PC-9 (cell line): ENCODE measurements at regions of chr14 and their contacts with region 1.

Region 1: GRCh38 chr14:69611201-69612011 is at the start of gene SUSD6:
- DNase-seq: peak; percentile 65 to 91
- H3K4me3 ChIP-seq: peak within 1 kb of the TSS; percentile 74
- H3K27ac ChIP-seq: no peak within 1 kb of the TSS
- H3K4me1 ChIP-seq: peaks cover 17% of the 10 kb centered on the region
- H3K27me3 ChIP-seq: no peaks in the 10 kb centered on the region
- CTCF ChIP-seq: no peak
- total RNA-seq, gene SUSD6: 24.1 and 43.3 TPM in 2 replicates

Region 2: GRCh38 chr14:69553221-69553620 is 58.2 kb before region 1 on chr14:
- CTCF ChIA-PET with region 1: no interaction called
- POLR2A ChIA-PET with region 1: no interaction called
- intact Hi-C with region 1: no loop called
- DNase-seq: peak in 1 of 2 experiments; percentile 76
- H3K4me3 ChIP-seq: no peak overlapping the region
- H3K27ac ChIP-seq: no peak overlapping the region
- H3K4me1 ChIP-seq: peaks cover 7% of the 10 kb centered on the region
- H3K27me3 ChIP-seq: peaks cover 17% of the 10 kb centered on the region; the same call in 1 of the 2 replicates
- CTCF ChIP-seq: no peak

Region 3: GRCh38 chr14:69629225-69630127 is 18.1 kb after region 1 on chr14:
- CTCF ChIA-PET with region 1: no interaction called
- POLR2A ChIA-PET with region 1: no interaction called
- intact Hi-C with region 1: loop called (anchors 2 kb)
- DNase-seq: no peak
- H3K4me3 ChIP-seq: no peak overlapping the region
- H3K27ac ChIP-seq: no peak overlapping the region
- H3K4me1 ChIP-seq: peaks cover 28% of the 10 kb centered on the region
- H3K27me3 ChIP-seq: no peaks in the 10 kb centered on the region
- CTCF ChIP-seq: no peak

Region 4: GRCh38 chr14:69650948-69651369 is 39.6 kb after region 1 on chr14:
- CTCF ChIA-PET with region 1: no interaction called
- POLR2A ChIA-PET with region 1: interaction called, 7 read pairs
- intact Hi-C with region 1: loop called (anchors 1 kb)
- DNase-seq: peak; percentile 85 to 97
- H3K4me3 ChIP-seq: peak overlapping the region; percentile 8; the same call in 1 of the 2 replicates
- H3K27ac ChIP-seq: peak overlapping the region; percentile 52
- H3K4me1 ChIP-seq: peaks cover 89% of the 10 kb centered on the region
- H3K27me3 ChIP-seq: no peaks in the 10 kb centered on the region
- CTCF ChIP-seq: no peak

Region 5: DNA sequence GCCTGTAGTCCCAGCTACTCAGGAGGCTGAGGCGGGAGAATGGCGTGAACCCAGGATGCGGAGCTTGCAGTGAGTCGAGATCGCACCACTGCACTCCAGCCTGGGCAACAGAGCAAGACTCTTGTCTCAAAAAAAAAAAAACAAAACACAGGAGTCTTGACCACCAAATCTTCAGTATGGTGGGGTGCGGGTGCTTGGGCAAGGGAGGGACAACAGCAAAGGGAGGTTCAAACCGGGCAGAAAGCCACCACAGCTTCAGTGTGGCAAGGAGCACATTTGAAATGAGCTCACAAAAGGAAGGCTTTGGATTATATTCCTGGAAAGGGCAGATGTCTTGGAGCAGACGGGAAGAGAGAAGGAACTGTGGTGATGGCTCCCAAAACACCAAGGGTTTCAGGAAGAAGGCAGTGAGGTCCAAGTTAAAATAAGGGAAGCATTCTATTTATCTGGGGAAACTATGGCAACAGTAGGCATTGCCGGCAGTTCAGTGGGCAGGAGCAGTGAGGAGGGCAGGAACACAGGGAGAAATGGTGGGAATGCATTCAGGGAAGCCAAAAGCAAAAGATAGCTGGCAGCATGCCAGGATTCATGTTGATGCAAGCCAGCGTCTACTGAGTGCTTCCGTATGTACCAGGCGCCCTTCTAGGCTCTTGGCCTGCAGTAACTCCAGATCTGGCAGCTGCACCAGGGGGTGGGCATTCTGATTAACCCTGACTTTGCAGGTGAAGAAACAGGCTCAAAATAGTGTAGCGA is 104.5 kb after region 1 on chr14:
- CTCF ChIA-PET with region 1: no interaction called
- POLR2A ChIA-PET with region 1: interaction called, 5 read pairs
- intact Hi-C with region 1: loop called (anchors 2 kb)
- DNase-seq: peak in 1 of 2 experiments; percentile 49
- H3K4me3 ChIP-seq: no peak overlapping the region
- H3K27ac ChIP-seq: no peak overlapping the region
- H3K4me1 ChIP-seq: no peaks in the 10 kb centered on the region
- H3K27me3 ChIP-seq: no peaks in the 10 kb centered on the region
- CTCF ChIP-seq: no peak